Caco-2 (cell line): ENCODE measurements at regions of chr11 and their contacts with region 1.

Region 1: DNA sequence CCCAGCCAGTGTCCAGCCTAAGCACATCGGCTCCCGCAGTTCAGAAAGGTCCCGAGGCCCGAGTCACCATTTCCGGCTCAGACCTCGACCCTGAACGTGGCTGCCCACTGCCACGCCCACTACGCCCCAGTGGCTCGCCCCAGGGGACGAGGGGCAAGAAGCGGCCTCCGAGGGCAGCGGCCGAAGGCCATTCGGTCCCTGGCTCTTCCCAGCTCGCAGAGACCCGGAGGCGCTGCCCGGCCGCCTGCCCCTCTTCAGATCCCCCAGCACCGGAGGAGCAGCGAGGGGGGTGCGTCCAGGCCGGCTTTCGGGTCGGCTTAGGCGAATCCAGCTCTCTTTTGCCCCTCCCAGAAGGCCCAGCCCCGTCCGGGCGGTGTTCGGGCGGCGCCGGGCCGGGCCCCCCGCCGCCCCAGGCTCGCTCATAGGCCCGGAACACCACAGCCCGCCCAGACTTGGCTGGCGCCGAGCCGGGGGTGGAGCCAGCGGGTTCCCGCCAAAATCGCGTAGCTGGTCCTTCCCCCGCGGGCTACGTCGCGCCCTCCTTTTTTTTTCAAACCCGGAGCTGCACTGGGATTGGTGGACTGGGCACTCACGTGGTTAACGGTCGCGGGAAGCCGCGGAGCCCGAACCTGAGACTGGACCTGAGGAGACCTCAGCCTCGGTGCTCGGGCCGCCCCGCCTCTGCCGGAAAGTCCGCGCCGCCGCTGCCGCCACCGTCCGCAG is at the start of gene WEE1:
- DNase-seq: peak; percentile 99 to 100
- H3K4me3 ChIP-seq: peak within 1 kb of the TSS; percentile 87
- H3K4me3 Mint-ChIP-seq: peak within 1 kb of the TSS; percentile 94
- H3K27ac Mint-ChIP-seq: peak within 1 kb of the TSS; percentile 100
- H3K4me1 ChIP-seq: peaks cover 40% of the 10 kb centered on the region
- H3K4me1 Mint-ChIP-seq: peaks cover 37% of the 10 kb centered on the region
- H3K27me3 ChIP-seq: no peaks in the 10 kb centered on the region
- H3K27me3 Mint-ChIP-seq: no peaks in the 10 kb centered on the region
- CTCF ChIP-seq: no peak
- total RNA-seq, gene WEE1: 108 and 116 TPM in 2 replicates

Region 2: DNA sequence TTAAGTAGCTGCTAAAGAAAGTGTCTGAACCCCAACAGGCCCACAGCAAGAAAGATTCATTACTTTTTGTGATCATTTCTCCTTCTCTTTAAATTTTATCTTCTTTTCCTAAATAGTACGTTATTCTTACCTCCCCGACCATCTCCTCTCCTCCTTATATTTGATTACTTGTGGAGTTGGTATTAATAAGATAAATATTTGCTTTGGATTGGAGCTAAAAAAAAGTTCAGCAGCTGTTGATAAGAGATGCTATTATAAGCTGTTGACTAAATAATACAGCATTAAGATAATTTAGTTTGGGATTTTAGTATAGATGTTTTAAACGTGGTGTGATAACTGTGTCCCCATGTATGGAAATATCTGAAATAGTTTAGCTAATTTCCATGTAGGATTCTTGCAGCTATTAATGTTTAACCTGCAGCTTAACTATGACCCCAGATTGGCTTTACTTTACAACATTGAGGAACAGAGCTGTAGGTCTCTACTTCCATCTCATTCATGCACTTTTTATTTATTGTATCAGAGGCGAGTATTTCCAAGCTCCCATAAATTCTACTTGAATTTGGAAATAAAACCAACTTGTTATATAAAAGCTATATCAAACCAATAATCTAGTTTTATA is 74.6 kb before region 1 on chr11:
- CTCF ChIA-PET with region 1: interaction called, 3 read pairs
- POLR2A ChIA-PET with region 1: interaction called, 14 read pairs
- intact Hi-C with region 1: no loop called
- DNase-seq: no peak
- H3K4me3 ChIP-seq: no peak overlapping the region
- H3K4me3 Mint-ChIP-seq: no peak overlapping the region
- H3K27ac Mint-ChIP-seq: peak overlapping the region; percentile 30
- H3K4me1 ChIP-seq: peaks cover 44% of the 10 kb centered on the region
- H3K4me1 Mint-ChIP-seq: peaks cover 26% of the 10 kb centered on the region
- H3K27me3 ChIP-seq: no peaks in the 10 kb centered on the region
- H3K27me3 Mint-ChIP-seq: no peaks in the 10 kb centered on the region
- CTCF ChIP-seq: no peak

Region 3: DNA sequence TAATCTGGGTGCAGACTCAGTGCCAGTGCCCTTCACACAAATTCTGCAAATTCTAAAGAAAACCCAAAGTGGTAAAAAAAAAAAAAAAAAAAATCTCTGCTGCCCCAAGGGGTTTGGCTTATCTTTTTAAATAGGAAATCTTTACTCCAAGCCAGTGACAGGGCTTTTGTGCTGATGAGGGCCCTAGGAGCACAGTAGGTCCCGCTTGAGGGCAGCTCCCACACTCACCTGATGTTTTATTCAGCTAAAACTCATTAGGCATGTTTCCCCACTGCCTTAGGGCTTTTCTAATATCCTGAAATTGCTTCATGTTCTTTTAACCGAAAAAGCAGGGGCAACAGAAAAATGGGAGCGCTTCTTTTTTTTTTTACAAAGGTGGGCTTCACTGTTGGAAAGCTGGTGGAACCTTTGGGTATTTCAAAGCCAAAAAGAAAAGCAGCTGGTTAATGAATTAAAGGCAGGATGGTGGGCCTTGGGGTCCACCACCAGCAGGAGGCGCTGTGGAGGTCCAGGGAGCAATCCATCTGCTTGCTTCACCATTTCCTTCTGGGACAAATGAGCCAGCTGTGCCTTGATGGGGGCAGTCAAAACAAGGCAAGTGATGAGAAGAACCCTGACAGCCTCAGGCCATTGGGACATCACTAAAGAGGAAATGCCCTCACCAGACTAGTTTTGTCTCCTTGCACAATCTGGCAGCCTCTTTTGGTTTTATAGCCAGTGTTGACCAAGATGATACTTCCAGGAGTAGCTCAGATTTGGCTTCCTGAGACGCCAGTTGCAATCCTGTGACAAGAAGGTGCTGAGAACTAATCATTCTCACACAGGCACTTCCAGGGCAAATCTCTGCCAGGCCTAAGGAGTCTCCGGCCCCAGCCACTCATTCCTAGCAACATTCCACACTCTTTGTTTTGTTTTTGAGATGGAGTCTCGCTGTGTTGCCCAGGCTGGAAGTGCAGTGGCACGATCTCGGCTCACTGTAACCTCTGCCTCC is 38.1 kb before region 1 on chr11:
- CTCF ChIA-PET with region 1: interaction called, 13 read pairs
- POLR2A ChIA-PET with region 1: interaction called, 15 read pairs
- intact Hi-C with region 1: loop called (anchors 1 kb)
- DNase-seq: peak; percentile 59 to 76
- H3K4me3 ChIP-seq: no peak overlapping the region
- H3K4me3 Mint-ChIP-seq: no peak overlapping the region
- H3K27ac Mint-ChIP-seq: peak overlapping the region; percentile 14
- H3K4me1 ChIP-seq: peaks cover 44% of the 10 kb centered on the region
- H3K4me1 Mint-ChIP-seq: peaks cover 20% of the 10 kb centered on the region
- H3K27me3 ChIP-seq: no peaks in the 10 kb centered on the region
- H3K27me3 Mint-ChIP-seq: no peaks in the 10 kb centered on the region
- CTCF ChIP-seq: peak; percentile 74 to 80

Region 4: GRCh38 chr11:9663699-9664275 is 90.6 kb after region 1 on chr11 and contains the start of gene SWAP70:
- CTCF ChIA-PET with region 1: no interaction called
- POLR2A ChIA-PET with region 1: no interaction called
- intact Hi-C with region 1: loop called (anchors 2 kb)
- DNase-seq: peak; percentile 95 to 97
- H3K4me3 ChIP-seq: peak within 1 kb of the TSS; percentile 85
- H3K4me3 Mint-ChIP-seq: peak within 1 kb of the TSS; percentile 95
- H3K27ac Mint-ChIP-seq: peak within 1 kb of the TSS; percentile 99
- H3K4me1 ChIP-seq: no peaks in the 10 kb centered on the region
- H3K4me1 Mint-ChIP-seq: no peaks in the 10 kb centered on the region
- H3K27me3 ChIP-seq: no peaks in the 10 kb centered on the region
- H3K27me3 Mint-ChIP-seq: no peaks in the 10 kb centered on the region
- CTCF ChIP-seq: peak; percentile 26 to 61
- total RNA-seq, gene SWAP70: 37.0 and 42.4 TPM in 2 replicates

Region 5: GRCh38 chr11:10272132-10272531 is 698.9 kb after region 1 on chr11:
- CTCF ChIA-PET with region 1: no interaction called
- POLR2A ChIA-PET with region 1: no interaction called
- intact Hi-C with region 1: no loop called
- DNase-seq: no peak
- H3K4me3 ChIP-seq: no peak overlapping the region
- H3K4me3 Mint-ChIP-seq: no peak overlapping the region
- H3K27ac Mint-ChIP-seq: no peak overlapping the region
- H3K4me1 ChIP-seq: 0 out of 2 replicates have a peak, but pooled peaks cover 2% of the 10 kb centered on the region
- H3K4me1 Mint-ChIP-seq: no peaks in the 10 kb centered on the region
- H3K27me3 ChIP-seq: no peaks in the 10 kb centered on the region
- H3K27me3 Mint-ChIP-seq: no peaks in the 10 kb centered on the region
- CTCF ChIP-seq: no peak